ENCODE measurements at regions of chr3 and their contacts with region 1.

Region 1: DNA sequence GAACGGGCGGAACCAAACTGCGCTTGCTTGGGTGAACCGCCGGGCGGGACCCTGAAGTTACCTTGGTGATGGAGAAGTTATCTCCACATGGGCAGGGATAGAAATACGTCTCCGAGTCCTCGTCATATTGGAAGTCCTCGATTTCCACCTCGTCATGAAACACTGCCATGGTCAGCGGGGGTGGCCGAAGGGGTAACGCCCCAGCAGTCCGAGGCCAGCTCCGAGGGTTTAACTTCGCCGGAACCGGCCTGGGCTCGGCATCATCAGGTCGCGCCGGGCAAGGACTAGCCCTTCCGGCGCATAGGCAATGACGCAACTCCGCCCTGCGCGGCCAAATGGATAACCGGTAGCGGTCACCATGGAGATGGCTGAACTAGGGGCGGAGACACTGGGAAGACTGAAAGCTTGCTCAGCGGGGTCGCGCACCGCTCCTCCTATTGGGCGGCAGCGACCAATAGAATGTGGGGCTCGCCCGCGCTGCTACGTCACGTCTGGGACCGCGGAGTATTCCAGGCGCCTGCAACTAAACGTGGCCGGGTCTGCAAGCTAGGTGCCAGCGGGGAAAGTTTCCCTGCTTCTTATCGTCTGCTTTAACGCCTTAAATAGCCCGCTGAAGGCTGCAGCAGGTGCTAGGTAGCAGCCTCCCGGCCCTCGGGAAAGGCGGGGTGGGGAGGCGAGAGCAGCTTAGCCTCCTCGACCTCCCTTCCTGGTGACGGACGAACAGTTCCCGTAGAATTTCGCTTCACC is at the starts of genes DPH3 and OXNAD1:
- DNase-seq: peak; percentile 100
- H3K4me3 ChIP-seq: peak within 1 kb of the TSS; percentile 84 to 99 (median 95)
- H3K27ac ChIP-seq: peak within 1 kb of the TSS; percentile 93 to 96
- H3K4me1 ChIP-seq: peaks cover 12 to 28% (median 23%) of the 10 kb centered on the region in 4 experiments
- H3K27me3 ChIP-seq: no peaks in the 10 kb centered on the region

Region 2: DNA sequence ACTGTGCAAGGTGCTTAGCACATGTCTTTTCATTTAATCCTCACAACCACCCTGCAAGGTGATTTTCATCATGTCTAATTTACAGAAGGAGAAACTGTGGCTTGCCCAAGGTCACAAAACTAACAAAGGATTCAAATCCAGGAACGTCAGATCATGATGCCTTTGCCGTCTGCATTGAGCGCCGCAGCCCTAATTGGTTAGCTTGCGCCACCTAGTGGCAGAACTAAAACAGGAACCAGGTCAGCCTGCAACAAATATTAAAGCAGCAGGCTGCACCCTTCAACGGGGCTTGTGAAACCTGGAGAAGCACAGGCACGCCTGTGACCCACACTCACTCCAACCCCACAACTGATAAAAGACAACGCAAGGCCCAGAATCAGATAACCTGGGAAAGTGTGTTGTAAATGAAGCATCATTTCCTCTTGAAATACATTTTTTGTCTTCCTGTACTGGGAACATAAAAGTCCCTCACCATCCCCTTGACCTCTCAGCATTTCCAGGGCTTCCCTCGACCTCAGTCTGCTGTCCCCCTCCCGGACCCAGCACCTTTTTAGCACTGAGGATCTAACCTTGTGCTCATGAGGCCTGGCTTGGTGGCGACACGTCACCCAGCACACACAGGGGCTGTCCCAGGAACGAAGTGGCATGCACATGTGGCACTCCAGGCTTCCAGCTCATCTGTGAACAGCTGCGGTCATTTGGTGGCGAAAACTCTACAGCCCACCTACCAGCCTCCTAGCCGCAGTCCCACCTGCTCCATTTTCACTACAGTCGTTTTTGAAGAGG is 17.4 kb before region 1 on chr3:
- CTCF ChIA-PET with region 1: interaction called, 19 read pairs
- POLR2A ChIA-PET with region 1: interaction called, 5 read pairs
- DNase-seq: peak; percentile 82 to 92 (median 89)
- H3K4me3 ChIP-seq: no peak overlapping the region
- H3K27ac ChIP-seq: no peak overlapping the region
- H3K4me1 ChIP-seq: peaks cover 0 to 5% (median 0%) of the 10 kb centered on the region in 4 experiments
- H3K27me3 ChIP-seq: no peaks in the 10 kb centered on the region

Region 3: DNA sequence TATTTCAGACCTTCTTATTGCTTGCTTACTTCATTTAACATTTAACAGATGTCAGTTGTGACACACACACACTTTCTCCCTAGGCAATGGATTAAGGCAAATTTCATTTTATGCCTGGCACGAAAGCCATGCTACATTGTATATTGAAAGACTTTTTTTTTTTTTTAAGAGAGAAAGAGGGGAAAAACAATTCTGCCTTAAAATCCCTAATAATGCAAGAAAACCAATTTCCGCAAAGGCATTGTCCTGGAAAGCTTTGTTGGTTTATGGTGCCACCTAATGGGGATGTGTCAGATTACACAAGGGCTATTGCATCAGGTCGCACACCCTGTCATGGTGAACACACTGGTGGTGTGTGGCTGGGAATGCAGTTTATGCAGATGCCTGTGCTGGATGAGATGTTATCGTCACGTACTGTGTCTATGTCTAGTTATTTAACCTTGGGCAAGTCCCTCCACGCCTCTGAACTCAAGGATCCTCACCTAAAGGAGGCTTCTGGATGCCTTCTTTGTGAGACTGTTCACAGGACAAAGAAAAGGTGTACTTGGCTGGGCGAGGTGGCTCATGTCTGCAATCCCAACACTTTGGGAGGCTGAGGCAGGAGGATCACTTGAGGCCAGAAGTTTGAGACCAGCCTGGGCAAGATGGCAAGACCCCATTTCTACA is 285.9 kb after region 1 on chr3:
- CTCF ChIA-PET with region 1: interaction called, 37 read pairs
- POLR2A ChIA-PET with region 1: no interaction called
- DNase-seq: peak; percentile 83 to 93 (median 92)
- H3K4me3 ChIP-seq: no peak overlapping the region
- H3K27ac ChIP-seq: no peak overlapping the region
- H3K4me1 ChIP-seq: peaks cover 0 to 10% (median 5%) of the 10 kb centered on the region in 4 experiments
- H3K27me3 ChIP-seq: no peaks in the 10 kb centered on the region